ENCODE measurements at regions of chr18 and their contacts with region 1.

Region 1: DNA sequence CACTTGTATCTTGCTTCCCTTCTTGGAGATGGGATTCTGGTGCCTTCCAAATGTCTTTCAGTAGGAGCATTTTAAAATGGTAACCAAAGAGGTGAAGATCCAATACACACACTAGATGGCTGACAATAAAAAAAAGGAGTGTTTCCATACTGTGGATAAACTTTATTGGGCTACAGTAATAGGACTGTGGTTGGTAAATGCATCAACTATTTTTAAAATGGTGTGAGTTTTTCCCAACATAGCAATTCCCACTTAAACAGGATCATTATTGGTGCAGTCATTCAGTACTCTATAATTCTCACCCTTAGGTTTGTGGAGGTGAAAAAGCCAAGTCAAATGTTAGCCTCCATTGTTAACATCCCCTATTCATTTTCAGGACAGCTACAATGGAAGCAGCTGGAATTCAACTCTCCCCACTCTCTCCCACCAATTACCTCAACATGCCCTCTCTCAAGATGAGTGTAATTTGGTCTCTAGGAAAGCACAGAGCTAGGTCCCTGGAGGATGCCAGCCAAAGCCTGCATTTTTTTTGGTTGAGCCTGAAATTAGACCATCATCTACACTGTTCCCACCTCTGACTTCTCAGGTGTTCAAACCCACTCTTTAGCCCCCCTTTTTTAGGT is 273.3 kb downstream of the TCF4 start:
- DNase-seq: no peak
- H3K4me3 ChIP-seq: no peak overlapping the region
- H3K27ac ChIP-seq: peak overlapping the region; percentile 95 to 100; a peak in 3 of 4 replicates
- H3K4me1 ChIP-seq: peaks cover 38 to 65% of the 10 kb centered on the region in 2 experiments; a peak in 3 of 4 replicates
- H3K27me3 ChIP-seq: no peaks in the 10 kb centered on the region
- CTCF ChIP-seq: no peak
- EP300 ChIP-seq: no peak
- RAD21 ChIP-seq: no peak

Region 2: GRCh38 chr18:55300421-55300935 is 14.2 kb before region 1 on chr18:
- CTCF ChIA-PET with region 1: interaction called, 16 read pairs
- POLR2A ChIA-PET with region 1: interaction called, 85 read pairs
- DNase-seq: peak; percentile 65
- H3K4me3 ChIP-seq: peak overlapping the region; percentile 46 to 66
- H3K27ac ChIP-seq: peak overlapping the region; percentile 92 to 100
- H3K4me1 ChIP-seq: peaks cover 14 to 67% of the 10 kb centered on the region in 2 experiments; a peak in 3 of 4 replicates
- H3K27me3 ChIP-seq: no peaks in the 10 kb centered on the region
- CTCF ChIP-seq: no peak
- EP300 ChIP-seq: peak; percentile 83 to 94
- RAD21 ChIP-seq: no peak; the same call in 1 of the 2 replicates

Region 3: GRCh38 chr18:55384551-55385275 is 70.0 kb after region 1 on chr18:
- CTCF ChIA-PET with region 1: no interaction called
- POLR2A ChIA-PET with region 1: no interaction called
- DNase-seq: peak; percentile 15
- H3K4me3 ChIP-seq: no peak overlapping the region
- H3K27ac ChIP-seq: no peak overlapping the region
- H3K4me1 ChIP-seq: peaks cover 0 to 16% of the 10 kb centered on the region in 2 experiments; a peak in 2 of 4 replicates
- H3K27me3 ChIP-seq: no peaks in the 10 kb centered on the region
- CTCF ChIP-seq: peak; percentile 72
- EP300 ChIP-seq: no peak
- RAD21 ChIP-seq: peak; percentile 76

Measured in SK-N-SH (cell line).